ENCODE measurements at regions of chr19 and their contacts with region 1.

Region 1: DNA sequence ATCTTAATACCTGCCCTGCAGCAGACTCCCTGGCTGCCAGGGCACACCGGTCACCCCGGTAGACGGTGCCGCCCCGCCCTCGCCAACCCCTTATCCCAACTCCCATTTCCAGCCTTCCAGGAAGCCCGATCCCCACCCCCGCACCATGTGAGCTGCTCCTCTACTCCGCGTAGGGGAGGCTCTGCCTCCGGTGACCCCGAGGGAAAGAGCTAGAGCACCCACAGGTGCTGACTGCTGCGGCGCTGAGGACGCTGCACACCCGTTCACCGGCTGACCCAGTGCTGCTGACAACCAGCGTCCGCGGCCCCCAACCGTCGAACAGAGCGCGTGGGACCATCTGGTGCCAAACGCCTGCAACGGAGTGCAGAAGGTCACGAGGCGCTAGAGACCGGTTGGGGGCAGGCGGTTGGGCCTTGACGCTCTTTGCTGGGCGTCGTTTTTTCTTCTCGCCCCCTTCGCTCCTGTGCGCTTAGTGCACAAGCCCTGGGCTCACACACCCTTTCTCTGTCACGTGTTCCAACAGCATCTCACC is 59.6 kb upstream of the ZNF599 start:
- DNase-seq: no peak
- H3K4me3 ChIP-seq: no peak overlapping the region
- H3K27ac ChIP-seq: no peak overlapping the region
- H3K4me1 ChIP-seq: no peaks in the 10 kb centered on the region
- H3K27me3 ChIP-seq: no peaks in the 10 kb centered on the region
- CTCF ChIP-seq: no peak

Region 2: DNA sequence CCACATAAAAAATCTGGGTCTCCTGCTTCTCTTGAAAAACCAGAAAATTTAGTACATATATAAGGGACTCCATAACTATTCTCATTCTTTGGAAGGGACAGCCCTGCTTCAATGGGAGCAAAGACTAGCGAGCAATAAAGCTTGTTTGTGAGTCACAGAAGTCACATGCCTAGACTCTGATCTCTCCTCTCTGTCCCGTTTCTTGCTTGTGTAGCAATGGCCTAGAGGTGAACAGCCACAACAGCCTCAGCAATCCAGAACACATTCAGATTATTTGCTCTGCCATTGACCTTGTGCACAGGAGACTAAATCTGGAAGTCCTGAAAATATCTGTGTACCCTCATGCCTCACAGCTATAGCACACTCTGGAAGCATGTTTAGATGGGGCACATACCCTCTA is 198.8 kb before region 1 on chr19:
- CTCF ChIA-PET with region 1: no interaction called
- dilution Hi-C with region 1: no loop called
- in situ Hi-C with region 1: no loop called
- intact Hi-C with region 1: no loop called
- DNase-seq: no peak
- H3K4me3 ChIP-seq: no peak overlapping the region
- H3K27ac ChIP-seq: no peak overlapping the region
- H3K4me1 ChIP-seq: no peaks in the 10 kb centered on the region
- H3K27me3 ChIP-seq: no peaks in the 10 kb centered on the region
- CTCF ChIP-seq: no peak

Region 3: DNA sequence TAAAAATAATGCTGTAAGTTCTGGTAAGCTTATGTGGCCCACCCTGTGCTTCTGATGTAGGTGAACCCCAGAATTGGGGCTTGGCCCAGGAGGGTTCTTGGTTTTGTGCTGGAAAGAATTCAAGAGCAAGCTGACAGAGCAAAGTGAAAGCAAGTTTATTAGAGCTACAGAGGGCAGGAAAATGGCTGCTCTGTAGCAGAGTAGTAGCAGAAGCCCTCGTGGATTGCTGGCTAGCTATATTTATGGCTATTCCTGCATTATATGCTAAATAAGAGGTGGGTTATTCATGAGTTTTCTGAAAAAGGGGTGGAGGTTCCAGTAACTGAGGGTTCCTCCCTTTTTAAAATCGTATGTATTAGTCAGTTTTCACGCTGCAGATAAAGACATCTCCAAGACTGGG is 39.1 kb before region 1 on chr19:
- CTCF ChIA-PET with region 1: no interaction called
- dilution Hi-C with region 1: loop called (anchors 5 kb)
- in situ Hi-C with region 1: no loop called
- intact Hi-C with region 1: no loop called
- DNase-seq: no peak
- H3K4me3 ChIP-seq: no peak overlapping the region
- H3K27ac ChIP-seq: no peak overlapping the region
- H3K4me1 ChIP-seq: no peaks in the 10 kb centered on the region
- H3K27me3 ChIP-seq: no peaks in the 10 kb centered on the region
- CTCF ChIP-seq: no peak

Region 4: GRCh38 chr19:34867631-34868030 is 35.0 kb after region 1 on chr19:
- CTCF ChIA-PET with region 1: no interaction called
- dilution Hi-C with region 1: no loop called
- in situ Hi-C with region 1: no loop called
- intact Hi-C with region 1: no loop called
- DNase-seq: no peak
- H3K4me3 ChIP-seq: no peak overlapping the region
- H3K27ac ChIP-seq: no peak overlapping the region
- H3K4me1 ChIP-seq: no peaks in the 10 kb centered on the region
- H3K27me3 ChIP-seq: no peaks in the 10 kb centered on the region
- CTCF ChIP-seq: no peak